ENCODE measurements at regions of chr1 and their contacts with region 1.

Region 1: DNA sequence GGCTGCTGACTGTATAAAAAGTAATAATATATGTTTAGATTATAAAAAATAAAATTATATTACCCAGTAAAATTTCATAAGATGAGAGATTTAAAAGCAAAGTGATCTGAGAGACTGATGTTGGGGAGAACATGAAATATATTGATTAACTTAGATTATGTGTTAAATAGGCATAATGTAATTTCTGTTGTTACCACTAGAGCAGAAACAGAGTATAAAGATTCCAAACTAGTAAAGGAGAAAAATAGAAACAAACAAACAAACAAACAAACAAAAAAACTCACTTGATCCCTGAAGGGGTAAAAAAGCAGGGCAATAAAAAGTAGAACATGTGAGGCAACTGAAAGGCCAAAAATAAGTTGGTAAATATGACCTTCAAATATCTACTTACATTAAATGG is 640.5 kb upstream of the RGS18 start:
- DNase-seq: no peak
- H3K4me3 Mint-ChIP-seq: no peak overlapping the region
- H3K27ac Mint-ChIP-seq: no peak overlapping the region
- H3K4me1 Mint-ChIP-seq: peaks cover 23% of the 10 kb centered on the region
- H3K27me3 Mint-ChIP-seq: no peaks in the 10 kb centered on the region
- CTCF ChIP-seq: no peak

Region 2: DNA sequence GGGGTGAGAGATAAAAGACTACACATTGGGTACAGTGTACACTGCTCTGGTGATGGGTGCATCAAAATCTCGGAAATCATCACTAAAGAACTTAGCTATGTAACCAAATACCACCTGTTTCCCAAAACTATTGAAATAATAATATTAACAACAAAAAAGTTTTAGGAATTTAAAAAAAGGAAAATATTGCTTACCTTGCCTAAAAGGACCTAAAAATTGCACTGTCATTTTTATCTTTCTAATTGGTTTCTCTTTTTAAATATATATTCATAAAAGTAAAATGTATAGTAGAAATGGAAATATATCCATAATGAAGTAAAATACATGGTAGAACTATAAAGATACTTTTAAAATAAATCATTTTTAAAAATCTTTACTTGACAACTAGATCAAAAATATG is 78.8 kb before region 1 on chr1:
- CTCF ChIA-PET with region 1: no interaction called
- intact Hi-C with region 1: no loop called
- DNase-seq: no peak
- H3K4me3 Mint-ChIP-seq: no peak overlapping the region
- H3K27ac Mint-ChIP-seq: no peak overlapping the region
- H3K4me1 Mint-ChIP-seq: no peaks in the 10 kb centered on the region
- H3K27me3 Mint-ChIP-seq: no peaks in the 10 kb centered on the region
- CTCF ChIP-seq: no peak

Region 3: DNA sequence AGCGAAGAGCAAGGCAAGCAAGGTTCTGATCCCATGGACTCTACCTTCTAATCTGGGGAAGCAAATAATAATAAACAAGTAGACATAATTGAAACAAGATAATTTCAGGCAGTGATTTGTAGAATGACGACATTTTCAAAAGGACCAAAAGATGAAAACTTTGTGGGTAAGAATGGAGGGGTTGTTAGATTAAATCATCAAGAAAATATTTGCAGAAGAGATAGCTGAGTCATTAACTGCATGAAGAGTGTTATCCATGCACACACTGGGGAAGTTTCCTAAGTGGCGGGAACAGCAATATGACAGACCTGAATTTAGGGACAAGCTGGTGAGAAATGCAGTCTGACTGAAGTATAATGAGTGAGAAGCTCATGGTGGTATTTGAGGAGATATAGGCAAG is 57.4 kb after region 1 on chr1:
- CTCF ChIA-PET with region 1: no interaction called
- intact Hi-C with region 1: loop called (anchors 10 kb)
- DNase-seq: no peak
- H3K4me3 Mint-ChIP-seq: no peak overlapping the region
- H3K27ac Mint-ChIP-seq: no peak overlapping the region
- H3K4me1 Mint-ChIP-seq: peaks cover 13% of the 10 kb centered on the region
- H3K27me3 Mint-ChIP-seq: no peaks in the 10 kb centered on the region
- CTCF ChIP-seq: no peak